ENCODE measurements at regions of chr12 and their contacts with region 1.

Region 1: GRCh38 chr12:7797698-7798398 is 8.6 kb downstream of the NANOG start:
- DNase-seq: no peak
- H3K4me3 ChIP-seq: no peak overlapping the region
- H3K27ac ChIP-seq: no peak overlapping the region
- H3K27me3 ChIP-seq: no peaks in the 10 kb centered on the region
- CTCF ChIP-seq: no peak

Region 2: GRCh38 chr12:7832059-7832696 is 34.3 kb after region 1 on chr12:
- intact Hi-C with region 1: no loop called
- DNase-seq: peak in 1 of 10 donors; percentile 9
- H3K4me3 ChIP-seq: no peak overlapping the region
- H3K27ac ChIP-seq: no peak overlapping the region
- H3K27me3 ChIP-seq: no peaks in the 10 kb centered on the region
- CTCF ChIP-seq: peak in 52 of 56 donors; percentile 19 to 71 (median 45)

Region 3: DNA sequence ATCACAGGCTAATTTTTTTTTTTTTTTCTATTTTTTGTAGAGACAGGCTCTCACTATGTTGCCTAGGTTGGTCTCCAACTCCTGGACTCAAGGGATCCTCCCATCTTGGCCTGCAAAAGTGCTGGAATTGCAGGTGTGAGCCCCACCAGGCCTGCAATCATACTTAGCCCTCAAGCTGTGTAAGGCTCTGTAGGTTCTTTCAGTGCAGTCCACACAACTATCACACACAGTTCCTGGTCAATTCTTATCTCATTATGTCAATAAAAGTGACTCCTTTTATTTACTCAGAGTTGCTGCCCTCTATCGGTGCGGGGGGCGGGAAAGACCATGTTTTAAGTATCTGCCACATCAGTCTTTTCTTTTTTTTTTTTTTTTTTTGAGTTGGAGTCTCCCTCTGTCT is 109.2 kb after region 1 on chr12:
- intact Hi-C with region 1: loop called in 1 of 2 experiments (anchors 5 kb)
- DNase-seq: no peak
- H3K4me3 ChIP-seq: no peak overlapping the region
- H3K27ac ChIP-seq: no peak overlapping the region
- H3K27me3 ChIP-seq: no peaks in the 10 kb centered on the region
- CTCF ChIP-seq: peak in 1 of 56 donors; percentile 11

Region 4: GRCh38 chr12:7981446-7981845 is 183.6 kb after region 1 on chr12:
- intact Hi-C with region 1: no loop called
- DNase-seq: no peak
- H3K4me3 ChIP-seq: no peak overlapping the region
- H3K27ac ChIP-seq: no peak overlapping the region
- H3K27me3 ChIP-seq: no peaks in the 10 kb centered on the region
- CTCF ChIP-seq: no peak